Common myeloid progenitor, CD34-positive (primary cell): ENCODE measurements at regions of chr6 and their contacts with region 1.

Region 1: DNA sequence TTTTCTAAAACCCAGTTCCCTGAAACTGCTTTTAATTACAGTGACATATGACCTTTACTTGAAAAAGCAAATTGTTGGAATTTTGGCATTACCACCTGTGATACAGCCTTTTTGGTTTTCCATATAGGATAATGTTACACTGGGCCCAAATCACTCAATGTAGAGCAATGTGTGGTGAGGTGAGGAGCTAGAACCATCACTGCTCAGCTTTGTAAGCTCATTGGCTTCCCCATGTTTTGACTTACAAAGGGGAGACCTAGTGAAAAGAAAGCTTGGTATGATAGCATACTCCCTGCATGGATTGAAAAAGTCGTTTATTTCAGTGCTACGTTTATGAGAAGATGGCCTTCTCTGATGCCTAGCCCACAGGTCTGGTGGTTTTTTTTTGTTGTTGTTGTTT is 470.4 kb upstream of the EPHA7 start:
- DNase-seq: no peak
- H3K4me3 ChIP-seq: no peak overlapping the region
- H3K27ac ChIP-seq: no peak overlapping the region
- H3K4me1 ChIP-seq: no peaks in the 10 kb centered on the region
- H3K27me3 ChIP-seq: no peaks in the 10 kb centered on the region

Region 2: DNA sequence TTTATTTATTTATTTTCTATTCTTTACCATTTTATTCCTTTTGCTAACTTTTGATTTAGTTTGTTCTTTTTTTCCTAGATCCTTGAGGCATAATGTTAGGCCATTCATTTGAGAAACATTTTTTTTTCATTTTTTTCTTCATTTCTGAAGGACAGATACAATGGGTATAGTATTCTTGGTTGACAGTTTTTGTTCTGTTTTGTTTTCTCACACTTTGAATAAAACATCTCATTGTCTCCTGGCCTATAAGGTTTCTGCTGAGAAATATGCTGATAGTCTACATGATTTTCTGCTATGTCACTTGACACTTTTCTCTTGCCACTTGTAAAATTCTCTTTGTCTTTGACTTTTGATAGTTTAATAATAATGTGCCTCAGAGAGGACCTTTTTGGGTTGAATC is 175.7 kb before region 1 on chr6:
- CTCF ChIA-PET with region 1: no interaction called
- POLR2A ChIA-PET with region 1: no interaction called
- DNase-seq: no peak
- H3K4me3 ChIP-seq: no peak overlapping the region
- H3K27ac ChIP-seq: no peak overlapping the region
- H3K4me1 ChIP-seq: no peaks in the 10 kb centered on the region
- H3K27me3 ChIP-seq: no peaks in the 10 kb centered on the region

Region 3: GRCh38 chr6:93940381-93940780 is 50.7 kb after region 1 on chr6:
- CTCF ChIA-PET with region 1: no interaction called
- POLR2A ChIA-PET with region 1: interaction called, 11 read pairs
- DNase-seq: no peak
- H3K4me3 ChIP-seq: no peak overlapping the region
- H3K27ac ChIP-seq: no peak overlapping the region
- H3K4me1 ChIP-seq: no peaks in the 10 kb centered on the region
- H3K27me3 ChIP-seq: no peaks in the 10 kb centered on the region

Region 4: DNA sequence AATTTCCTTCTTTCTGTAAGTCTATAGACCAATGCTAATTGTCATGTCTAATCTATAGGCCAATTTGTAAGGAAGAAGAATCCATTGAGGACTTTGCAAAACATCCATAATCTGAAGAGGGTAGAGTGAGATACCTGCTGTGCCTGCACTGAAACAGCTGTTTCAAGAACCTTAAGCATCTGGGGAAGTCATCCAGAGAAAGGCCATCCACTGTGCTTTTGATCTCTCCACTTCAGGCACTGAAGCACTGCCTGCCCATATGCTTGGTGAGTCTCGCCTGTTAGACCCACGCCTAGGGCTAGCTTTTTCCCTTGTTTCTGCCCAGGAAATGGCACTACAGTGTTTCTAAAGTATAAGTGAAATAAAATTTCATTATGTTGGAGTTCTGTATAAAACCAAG is 451.5 kb after region 1 on chr6:
- CTCF ChIA-PET with region 1: no interaction called
- POLR2A ChIA-PET with region 1: no interaction called
- DNase-seq: no peak
- H3K4me3 ChIP-seq: no peak overlapping the region
- H3K27ac ChIP-seq: no peak overlapping the region
- H3K4me1 ChIP-seq: no peaks in the 10 kb centered on the region
- H3K27me3 ChIP-seq: no peaks in the 10 kb centered on the region